ENCODE measurements at regions of chr11 and their contacts with region 1.

Region 1: DNA sequence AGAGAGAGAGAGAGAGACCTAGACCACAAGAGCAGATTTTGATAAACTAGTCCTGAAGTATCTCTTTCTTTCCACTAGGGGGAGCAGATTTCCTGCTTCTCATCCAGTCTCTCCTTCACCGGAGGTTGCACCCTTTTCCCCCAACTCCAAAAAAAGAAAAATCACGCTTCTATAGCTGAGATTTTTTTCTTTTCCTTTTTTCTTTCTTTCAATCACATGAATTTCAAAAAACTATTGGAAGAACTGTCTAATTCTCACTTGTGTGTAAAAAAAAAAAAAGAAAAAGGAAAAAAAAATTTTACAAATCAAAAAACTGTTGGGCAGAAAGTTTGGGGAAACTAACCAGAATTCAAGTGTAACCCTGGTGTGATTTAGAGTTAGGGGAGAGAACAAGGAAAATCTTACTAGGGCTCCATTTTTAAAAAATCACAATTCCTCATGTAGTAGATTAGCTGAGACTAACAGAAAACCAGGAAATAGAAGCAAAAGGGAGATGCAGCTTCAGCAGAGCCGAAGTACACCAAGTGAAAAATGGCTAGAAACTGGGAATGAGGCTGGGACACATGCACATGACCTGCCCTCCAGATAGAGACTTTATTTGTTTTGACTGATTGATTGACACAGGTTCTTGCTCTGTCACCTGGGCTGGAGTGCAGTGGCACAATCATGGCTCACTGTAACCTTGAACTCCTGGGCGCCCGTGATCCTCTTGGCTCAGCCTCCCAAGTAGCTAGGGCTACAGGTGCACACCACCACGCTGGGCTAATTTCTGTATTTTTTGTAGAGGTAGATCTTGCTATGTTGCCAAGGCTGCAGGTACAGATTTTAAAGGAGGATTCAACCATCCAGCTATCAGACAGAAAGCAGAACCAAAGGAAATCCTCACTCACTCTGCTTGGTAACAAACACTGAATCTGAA is 27.1 kb downstream of the SDHD start:
- DNase-seq: no peak
- H3K4me3 ChIP-seq: no peak overlapping the region
- H3K27ac ChIP-seq: no peak overlapping the region
- H3K4me1 ChIP-seq: peaks cover 0 to 7% (median 0%) of the 10 kb centered on the region in 4 donors
- H3K27me3 ChIP-seq: no peaks in the 10 kb centered on the region
- CTCF ChIP-seq: peak; percentile 68 to 76 (median 69)
- EP300 ChIP-seq: no peak
- POLR2A ChIP-seq: no peak

Region 2: GRCh38 chr11:112174789-112175598 is 61.2 kb after region 1 on chr11 and contains the start of gene BCO2:
- in situ Hi-C with region 1: loop called in 2 of 4 experiments (anchors 10 kb)
- intact Hi-C with region 1: no loop called
- DNase-seq: peak; percentile 85
- H3K4me3 ChIP-seq: peak within 1 kb of the TSS in 3 of 4 donors; percentile 0 to 20 (median 15)
- H3K27ac ChIP-seq: peak within 1 kb of the TSS; percentile 50 to 73 (median 66)
- H3K4me1 ChIP-seq: peaks cover 0 to 12% (median 9%) of the 10 kb centered on the region in 4 donors
- H3K27me3 ChIP-seq: no peaks in the 10 kb centered on the region
- CTCF ChIP-seq: peak; percentile 76 to 97 (median 91)
- EP300 ChIP-seq: no peak
- POLR2A ChIP-seq: no peak
- total RNA-seq, gene BCO2: 2.8 to 12.1 (median 4.0) TPM

Measured in transverse colon (tissue), 4 donors.